Brain microvascular endothelial cell (primary cell): ENCODE measurements at regions of chr9 and their contacts with region 1.

Region 1: DNA sequence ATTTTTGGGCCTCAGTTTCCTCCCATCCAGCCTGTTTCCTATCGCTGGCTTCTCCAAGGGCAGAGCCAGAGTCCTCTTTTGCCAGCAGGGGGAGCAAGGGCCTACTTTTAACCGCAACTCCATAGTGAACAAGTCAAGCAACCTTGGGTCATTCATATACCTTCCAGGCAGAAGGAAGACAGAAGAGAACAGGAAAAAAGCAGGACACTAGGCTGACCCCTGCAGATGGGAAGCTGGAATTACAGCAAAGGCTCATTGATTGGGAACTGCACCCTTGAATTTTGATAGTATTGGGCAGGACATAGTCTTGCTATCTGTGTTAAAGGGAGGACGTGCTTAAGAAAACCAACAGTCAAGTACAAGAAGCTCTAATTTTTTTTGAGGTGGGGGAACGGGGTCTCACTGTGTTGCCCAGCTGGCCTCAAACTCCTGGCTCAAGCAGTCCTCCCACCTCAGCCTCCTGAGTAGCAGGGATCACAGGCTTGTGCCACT is 30.1 kb downstream of the QRFP start:
- DNase-seq: peak; percentile 82
- H3K4me3 ChIP-seq: peak overlapping the region; percentile 48
- H3K27ac ChIP-seq: peak overlapping the region; percentile 15
- H3K27me3 ChIP-seq: no peaks in the 10 kb centered on the region
- CTCF ChIP-seq: peak; percentile 98

Region 2: DNA sequence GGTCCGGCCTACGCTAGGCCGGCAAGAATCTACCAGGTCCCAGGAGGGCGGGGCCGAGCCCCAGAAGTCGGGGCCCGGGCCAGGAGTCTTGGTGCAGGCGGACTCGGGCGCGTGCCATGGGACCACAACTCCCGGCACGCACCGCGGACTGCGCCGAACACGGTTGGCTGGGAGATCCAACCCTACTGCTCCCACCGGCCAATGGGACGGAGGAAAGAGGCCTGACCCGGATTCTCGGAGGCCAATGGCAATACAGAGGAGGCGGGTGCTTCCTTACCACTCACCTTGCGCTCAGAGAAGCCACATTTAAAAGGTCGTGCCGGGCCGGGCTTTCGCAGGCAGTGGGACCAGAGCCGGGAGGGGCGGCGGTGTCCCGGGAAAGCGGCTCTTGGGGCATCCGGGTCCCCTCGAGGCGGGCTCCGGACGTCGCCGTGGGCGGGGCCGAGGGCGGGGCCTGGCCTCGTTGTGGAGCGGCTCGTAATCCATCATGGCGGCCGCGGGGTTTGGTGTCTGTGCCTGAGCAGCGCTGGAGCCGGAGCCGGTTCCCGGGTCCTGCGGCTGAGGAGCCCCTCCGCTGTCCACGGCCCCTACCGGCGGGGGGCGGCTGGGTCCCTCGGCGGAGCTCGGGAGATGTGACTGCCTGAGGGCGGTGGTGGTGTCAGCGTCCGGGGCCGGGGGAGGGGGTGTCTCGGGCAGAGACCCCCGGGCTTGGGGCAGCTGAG is 153.8 kb before region 1 on chr9:
- in situ Hi-C with region 1: loop called (anchors 25 kb)
- DNase-seq: peak; percentile 99
- H3K4me3 ChIP-seq: peak overlapping the region; percentile 83
- H3K27ac ChIP-seq: peak overlapping the region; percentile 93
- H3K27me3 ChIP-seq: no peaks in the 10 kb centered on the region
- CTCF ChIP-seq: no peak